B cell (primary cell): ENCODE measurements at regions of chr11 and their contacts with region 1.

Region 1: DNA sequence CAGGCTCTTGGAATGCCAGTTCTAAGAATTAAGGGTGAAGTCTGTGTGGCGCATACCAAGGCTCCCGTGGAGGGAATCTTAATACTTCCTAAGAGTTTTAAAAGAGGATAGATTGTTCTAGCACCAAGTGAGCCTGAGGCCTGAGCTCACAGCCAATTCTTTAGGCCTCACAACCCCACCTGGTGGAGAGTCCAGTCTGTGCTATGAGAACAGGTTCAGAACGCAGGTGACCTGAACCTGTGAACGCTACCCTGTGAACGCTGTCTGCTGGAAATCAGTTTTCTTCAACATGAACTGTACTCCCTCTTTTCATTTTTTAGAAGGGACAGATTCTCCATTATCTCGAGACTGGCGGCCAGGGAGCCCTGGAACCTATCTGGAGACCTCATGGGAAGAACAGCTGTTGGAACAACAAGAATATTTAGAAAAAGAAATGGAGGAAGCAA is 43.2 kb upstream of the DLAT start:
- DNase-seq: peak; percentile 47
- ATAC-seq: peak; percentile 47
- H3K4me3 ChIP-seq: no peak overlapping the region
- H3K4me3 Mint-ChIP-seq: no peak overlapping the region
- H3K27ac ChIP-seq: no peak overlapping the region
- H3K27ac Mint-ChIP-seq: no peak overlapping the region
- H3K4me1 ChIP-seq: peaks cover 8 to 9% of the 10 kb centered on the region in 2 donors
- H3K4me1 Mint-ChIP-seq: peaks cover 7% of the 10 kb centered on the region
- H3K27me3 ChIP-seq: peaks cover 0 to 33% (median 26%) of the 10 kb centered on the region in 4 experiments
- H3K27me3 Mint-ChIP-seq: peaks cover 35% of the 10 kb centered on the region
- CTCF ChIP-seq: peak; percentile 61

Region 2: DNA sequence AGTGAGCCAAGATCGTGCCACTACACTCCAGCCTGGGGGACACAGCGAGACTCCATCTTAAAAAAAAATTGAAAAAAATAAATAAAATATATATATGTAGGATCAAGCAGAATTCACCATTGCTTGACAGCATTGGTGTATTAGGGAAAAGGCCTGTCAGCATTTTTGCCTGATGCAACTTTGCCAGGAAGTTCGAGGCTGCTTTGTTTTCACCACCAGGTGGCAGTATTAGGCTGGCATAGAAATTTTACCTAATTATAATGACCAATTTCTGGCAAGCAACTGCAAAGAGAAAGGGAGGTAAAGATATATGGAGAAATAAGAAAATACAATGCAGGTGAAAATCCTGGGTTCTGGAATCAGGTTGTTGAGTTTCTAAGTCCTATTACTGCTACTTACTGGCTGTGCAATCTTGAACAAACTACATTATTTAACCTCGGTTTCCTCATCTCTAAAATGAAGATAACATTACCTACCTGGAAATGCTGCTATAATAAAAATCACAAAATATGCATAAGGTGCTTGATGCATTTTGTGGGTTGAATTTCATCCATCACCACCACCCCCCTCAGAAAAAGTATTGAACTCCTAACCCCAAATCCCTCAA is 416.8 kb before region 1 on chr11:
- CTCF ChIA-PET with region 1: no interaction called
- POLR2A ChIA-PET with region 1: no interaction called
- intact Hi-C with region 1: loop called (anchors 5 kb)
- DNase-seq: peak; percentile 72
- ATAC-seq: no peak
- H3K4me3 ChIP-seq: no peak overlapping the region
- H3K4me3 Mint-ChIP-seq: no peak overlapping the region
- H3K27ac ChIP-seq: no peak overlapping the region
- H3K27ac Mint-ChIP-seq: no peak overlapping the region
- H3K4me1 ChIP-seq: no peaks in the 10 kb centered on the region
- H3K4me1 Mint-ChIP-seq: no peaks in the 10 kb centered on the region
- H3K27me3 ChIP-seq: no peaks in the 10 kb centered on the region
- H3K27me3 Mint-ChIP-seq: peaks cover 8% of the 10 kb centered on the region
- CTCF ChIP-seq: peak; percentile 94

Region 3: DNA sequence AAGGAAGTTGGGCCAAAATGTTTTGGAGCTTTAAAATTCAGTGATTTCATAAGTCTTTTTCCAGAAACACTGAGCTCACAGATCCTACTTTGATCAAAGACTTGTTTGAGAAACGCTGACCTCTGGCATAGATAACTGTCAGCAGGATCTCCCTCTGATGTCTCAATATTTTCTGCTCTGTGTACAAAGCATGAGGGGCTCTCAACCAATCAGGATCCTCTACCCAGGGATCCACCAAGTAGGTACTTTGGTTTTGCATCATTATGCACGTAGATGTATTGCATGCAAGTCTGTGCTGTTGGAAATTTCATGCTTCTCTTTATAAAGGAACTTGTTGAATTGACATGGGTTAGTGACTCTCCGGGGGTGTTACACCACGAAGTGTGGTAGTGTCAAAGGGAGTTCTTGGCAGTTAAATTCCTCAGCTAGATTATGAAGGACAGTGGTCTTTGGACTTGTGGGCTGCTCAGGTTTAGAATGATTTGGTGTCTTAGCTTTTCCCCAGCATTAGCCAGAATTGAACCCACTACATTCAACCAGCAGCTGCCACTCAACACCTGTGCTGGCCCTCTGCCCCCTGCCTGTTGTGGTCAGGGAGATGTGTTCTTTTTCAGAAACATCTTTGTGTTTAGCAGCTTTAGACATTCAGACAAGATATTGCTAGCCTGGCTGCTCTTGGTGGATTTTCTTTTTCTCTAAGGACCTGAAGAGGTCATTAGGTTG is 46.6 kb before region 1 on chr11:
- CTCF ChIA-PET with region 1: interaction called, 54 read pairs
- POLR2A ChIA-PET with region 1: no interaction called
- intact Hi-C with region 1: loop called (anchors 1 kb)
- DNase-seq: no peak
- ATAC-seq: no peak
- H3K4me3 ChIP-seq: no peak overlapping the region
- H3K4me3 Mint-ChIP-seq: peak overlapping the region; percentile 9
- H3K27ac ChIP-seq: no peak overlapping the region
- H3K27ac Mint-ChIP-seq: no peak overlapping the region
- H3K4me1 ChIP-seq: peaks cover 21 to 36% of the 10 kb centered on the region in 2 donors
- H3K4me1 Mint-ChIP-seq: peaks cover 32% of the 10 kb centered on the region
- H3K27me3 ChIP-seq: peaks cover 0 to 18% (median 5%) of the 10 kb centered on the region in 4 experiments
- H3K27me3 Mint-ChIP-seq: peaks cover 18% of the 10 kb centered on the region
- CTCF ChIP-seq: no peak

Region 4: DNA sequence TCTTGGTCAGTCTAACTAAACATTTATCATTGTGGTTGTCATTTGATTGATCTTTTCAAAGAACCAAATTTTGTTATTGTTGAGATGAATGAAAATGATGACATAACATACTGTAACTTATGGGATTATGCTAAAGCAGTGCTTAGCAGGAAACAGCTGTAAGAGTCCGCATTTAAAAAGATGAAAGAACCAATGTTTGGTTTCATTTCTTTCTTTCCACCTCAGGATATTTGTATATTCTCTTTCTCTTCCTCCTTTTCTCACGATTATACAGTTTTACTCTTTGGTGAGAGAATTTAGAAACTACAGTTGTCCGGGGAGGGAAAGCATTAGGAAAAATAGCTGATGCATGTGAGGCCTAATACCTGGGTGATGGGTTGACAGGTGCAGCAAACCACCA is 68.7 kb after region 1 on chr11:
- CTCF ChIA-PET with region 1: no interaction called
- POLR2A ChIA-PET with region 1: no interaction called
- intact Hi-C with region 1: no loop called
- DNase-seq: peak; percentile 49
- ATAC-seq: peak; percentile 51
- H3K4me3 ChIP-seq: peak overlapping the region in 1 of 5 experiments; percentile 16
- H3K4me3 Mint-ChIP-seq: peak overlapping the region; percentile 42
- H3K27ac ChIP-seq: peak overlapping the region; percentile 0 to 75
- H3K27ac Mint-ChIP-seq: peak overlapping the region; percentile 75
- H3K4me1 ChIP-seq: peaks cover 39 to 40% of the 10 kb centered on the region in 2 donors
- H3K4me1 Mint-ChIP-seq: peaks cover 48% of the 10 kb centered on the region
- H3K27me3 ChIP-seq: no peaks in the 10 kb centered on the region
- H3K27me3 Mint-ChIP-seq: no peaks in the 10 kb centered on the region
- CTCF ChIP-seq: no peak